ENCODE measurements at regions of chr1 and their contacts with region 1.

Region 1: GRCh38 chr1:62746085-62746808 is 37.7 kb upstream of the ATG4C start:
- DNase-seq: peak; percentile 17 to 36
- ATAC-seq: peak; percentile 50 to 64; a peak in 4 of 6 replicates
- H3K4me3 ChIP-seq: no peak overlapping the region
- H3K27ac ChIP-seq: peak overlapping the region; percentile 13 to 52; a peak in 2 of 6 replicates
- H3K4me1 ChIP-seq: 0 out of 3 replicates have a peak, but pooled peaks cover 3% of the 10 kb centered on the region
- CTCF ChIP-seq: peak; percentile 71
- EP300 ChIP-seq: no peak
- POLR2A ChIP-seq: no peak
- RAD21 ChIP-seq: peak; percentile 80 to 85

Region 2: GRCh38 chr1:62508187-62508758 is 238.0 kb before region 1 on chr1:
- CTCF ChIA-PET with region 1: interaction called, 50 read pairs
- POLR2A ChIA-PET with region 1: no interaction called
- DNase-seq: peak; percentile 7 to 44
- ATAC-seq: no peak; a peak in 1 of 6 replicates
- H3K4me3 ChIP-seq: no peak overlapping the region
- H3K27ac ChIP-seq: no peak overlapping the region
- H3K4me1 ChIP-seq: no peaks in the 10 kb centered on the region
- CTCF ChIP-seq: peak; percentile 66
- EP300 ChIP-seq: no peak
- POLR2A ChIP-seq: no peak
- RAD21 ChIP-seq: peak; percentile 48 to 60; a peak in 4 of 5 replicates

Region 3: DNA sequence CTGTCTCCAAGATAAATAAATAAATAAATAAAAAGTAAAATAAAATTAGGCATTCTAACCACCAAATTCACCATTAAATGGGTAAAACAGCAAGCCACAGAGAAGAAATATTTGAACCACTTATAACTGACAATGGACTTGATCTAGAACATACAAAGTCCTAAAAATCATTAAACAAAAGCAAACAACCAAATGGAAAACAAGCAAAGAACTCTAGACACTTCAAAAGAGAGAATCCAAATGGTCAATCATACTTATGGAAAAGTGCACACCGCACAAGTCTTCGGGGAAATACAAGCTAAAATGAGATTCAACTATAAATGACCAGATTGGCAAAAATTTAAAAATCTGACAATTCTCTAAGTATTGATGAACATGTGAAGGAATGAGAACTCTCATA is 222.4 kb before region 1 on chr1:
- CTCF ChIA-PET with region 1: interaction called, 67 read pairs
- POLR2A ChIA-PET with region 1: no interaction called
- DNase-seq: no peak
- ATAC-seq: no peak
- H3K4me3 ChIP-seq: no peak overlapping the region
- H3K27ac ChIP-seq: no peak overlapping the region
- H3K4me1 ChIP-seq: no peaks in the 10 kb centered on the region
- CTCF ChIP-seq: no peak
- EP300 ChIP-seq: no peak
- POLR2A ChIP-seq: no peak
- RAD21 ChIP-seq: no peak

Region 4: GRCh38 chr1:62530516-62531154 is 215.6 kb before region 1 on chr1:
- CTCF ChIA-PET with region 1: interaction called, 67 read pairs
- POLR2A ChIA-PET with region 1: no interaction called
- DNase-seq: peak; percentile 10 to 67
- ATAC-seq: peak; percentile 94 to 96
- H3K4me3 ChIP-seq: no peak overlapping the region
- H3K27ac ChIP-seq: no peak overlapping the region
- H3K4me1 ChIP-seq: no peaks in the 10 kb centered on the region
- CTCF ChIP-seq: peak; percentile 66
- EP300 ChIP-seq: no peak
- POLR2A ChIP-seq: no peak
- RAD21 ChIP-seq: peak; percentile 80 to 85

Region 5: GRCh38 chr1:62539028-62539447 is 207.2 kb before region 1 on chr1:
- CTCF ChIA-PET with region 1: interaction called, 22 read pairs
- POLR2A ChIA-PET with region 1: no interaction called
- DNase-seq: no peak
- ATAC-seq: no peak
- H3K4me3 ChIP-seq: no peak overlapping the region
- H3K27ac ChIP-seq: no peak overlapping the region
- H3K4me1 ChIP-seq: no peaks in the 10 kb centered on the region
- CTCF ChIP-seq: no peak
- EP300 ChIP-seq: no peak
- POLR2A ChIP-seq: no peak
- RAD21 ChIP-seq: no peak

Region 6: DNA sequence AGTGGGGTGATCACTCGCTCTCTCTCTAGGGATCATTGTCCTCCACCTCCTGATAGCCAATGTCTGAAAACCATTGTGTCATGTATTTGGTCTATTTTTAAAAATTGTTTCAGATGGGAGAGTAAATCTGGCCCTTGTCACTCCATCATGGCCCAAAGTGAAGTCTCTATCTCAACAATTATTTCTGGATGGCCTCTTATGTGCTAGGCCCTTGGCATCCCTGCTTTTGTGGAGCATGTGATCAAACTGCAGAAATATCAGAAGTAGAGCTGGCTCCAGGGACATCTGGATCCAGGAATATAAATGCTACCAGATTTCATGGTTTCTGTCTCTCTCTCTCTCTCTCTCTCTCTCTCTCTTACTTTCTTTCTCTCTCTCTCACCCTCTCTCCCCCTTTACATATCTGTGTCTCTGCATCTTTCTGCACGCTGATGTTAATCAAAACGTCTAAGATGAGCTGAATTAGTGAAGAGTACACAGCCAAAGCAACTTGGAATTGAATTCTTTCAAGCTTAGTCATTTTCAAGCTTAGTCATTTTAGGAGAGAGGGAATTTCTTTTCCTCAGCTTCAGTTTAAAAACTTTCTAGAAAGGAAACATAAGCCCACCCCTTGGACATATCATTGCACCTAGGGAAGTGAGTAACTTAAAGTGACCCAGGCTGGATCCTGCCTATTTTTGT is 10.6 kb before region 1 on chr1:
- CTCF ChIA-PET with region 1: interaction called, 13 read pairs
- POLR2A ChIA-PET with region 1: no interaction called
- DNase-seq: no peak
- ATAC-seq: no peak
- H3K4me3 ChIP-seq: no peak overlapping the region
- H3K27ac ChIP-seq: no peak overlapping the region
- H3K4me1 ChIP-seq: peaks cover 4% of the 10 kb centered on the region; the same call in 1 of the 3 replicates
- CTCF ChIP-seq: no peak
- EP300 ChIP-seq: no peak
- POLR2A ChIP-seq: no peak
- RAD21 ChIP-seq: no peak

Measured in A549 (cell line).